Activated B cell treated with CpG ODN at 0.5 μM for 24 hours (primary cell): ENCODE measurements at regions of chr19 and their contacts with region 1.

Region 1: GRCh38 chr19:40144947-40145748 is 46.1 kb upstream of the MAP3K10 start:
- DNase-seq: no peak
- ATAC-seq: peak; percentile 28
- H3K4me3 Mint-ChIP-seq: no peak overlapping the region
- H3K27ac Mint-ChIP-seq: no peak overlapping the region
- H3K4me1 Mint-ChIP-seq: peaks cover 57% of the 10 kb centered on the region
- H3K27me3 Mint-ChIP-seq: no peaks in the 10 kb centered on the region
- CTCF ChIP-seq: no peak

Region 2: DNA sequence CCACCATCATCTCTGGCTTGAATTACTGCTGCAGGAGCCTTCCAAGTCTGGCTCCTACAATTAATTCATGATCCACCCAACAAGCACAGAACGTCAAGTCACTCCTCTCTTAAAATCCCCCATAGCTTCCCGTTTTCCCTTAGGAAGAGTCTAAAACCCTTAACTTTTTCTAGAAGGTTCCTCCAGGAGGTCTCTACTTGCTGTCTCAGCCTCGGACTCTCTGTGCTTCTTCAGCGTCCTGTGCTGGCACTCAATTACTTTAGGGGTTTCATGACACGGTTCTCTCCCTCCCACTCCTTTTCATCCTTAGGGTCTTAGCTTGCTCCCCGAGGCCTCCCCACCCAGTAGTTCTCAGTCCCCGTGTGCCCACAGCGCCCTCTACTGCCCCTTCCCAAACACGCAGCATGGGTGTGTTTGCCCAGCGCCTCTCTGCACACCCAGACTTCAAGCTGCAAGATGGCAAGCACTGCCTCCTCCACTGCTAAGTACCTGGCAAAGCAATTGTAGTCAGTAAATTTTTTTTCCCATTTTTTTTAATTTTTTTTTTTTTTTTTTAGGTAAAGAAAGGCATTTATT is 20.3 kb after region 1 on chr19:
- CTCF ChIA-PET with region 1: interaction called, 26 read pairs
- POLR2A ChIA-PET with region 1: interaction called, 11 read pairs
- intact Hi-C with region 1: loop called (anchors 1 kb)
- DNase-seq: peak; percentile 39
- ATAC-seq: peak; percentile 66
- H3K4me3 Mint-ChIP-seq: peak overlapping the region; percentile 17
- H3K27ac Mint-ChIP-seq: peak overlapping the region; percentile 42
- H3K4me1 Mint-ChIP-seq: peaks cover 29% of the 10 kb centered on the region
- H3K27me3 Mint-ChIP-seq: no peaks in the 10 kb centered on the region
- CTCF ChIP-seq: no peak

Region 3: GRCh38 chr19:40744554-40745401 is 599.6 kb after region 1 on chr19:
- CTCF ChIA-PET with region 1: no interaction called
- POLR2A ChIA-PET with region 1: no interaction called
- intact Hi-C with region 1: no loop called
- DNase-seq: no peak
- ATAC-seq: peak; percentile 25
- H3K4me3 Mint-ChIP-seq: no peak overlapping the region
- H3K27ac Mint-ChIP-seq: no peak overlapping the region
- H3K4me1 Mint-ChIP-seq: peaks cover 16% of the 10 kb centered on the region
- H3K27me3 Mint-ChIP-seq: no peaks in the 10 kb centered on the region
- CTCF ChIP-seq: no peak